ENCODE measurements at regions of chr6 and their contacts with region 1.

Region 1: GRCh38 chr6:56902641-56903464 is 52.1 kb upstream of the BEND6 start:
- DNase-seq: no peak
- ATAC-seq: peak in 3 of 4 donors; percentile 66 to 74 (median 70)
- H3K4me3 ChIP-seq: no peak overlapping the region
- H3K27ac ChIP-seq: no peak overlapping the region
- H3K4me1 ChIP-seq: no peaks in the 10 kb centered on the region
- H3K27me3 ChIP-seq: no peaks in the 10 kb centered on the region
- CTCF ChIP-seq: peak; percentile 37 to 59 (median 55)

Region 2: GRCh38 chr6:57021086-57021720 is 118.3 kb after region 1 on chr6:
- intact Hi-C with region 1: loop called in 2 of 3 experiments (anchors 5 to 10 kb)
- DNase-seq: no peak
- ATAC-seq: peak; percentile 56 to 83 (median 81)
- H3K4me3 ChIP-seq: no peak overlapping the region
- H3K27ac ChIP-seq: no peak overlapping the region
- H3K4me1 ChIP-seq: no peaks in the 10 kb centered on the region
- H3K27me3 ChIP-seq: no peaks in the 10 kb centered on the region
- CTCF ChIP-seq: peak; percentile 18 to 55 (median 37)

Region 3: GRCh38 chr6:57316581-57317059 is 413.8 kb after region 1 on chr6:
- intact Hi-C with region 1: loop called in 2 of 3 experiments (anchors 5 to 10 kb)
- DNase-seq: peak; percentile 66 to 85 (median 71)
- ATAC-seq: peak; percentile 93 to 98 (median 94)
- H3K4me3 ChIP-seq: peak overlapping the region; percentile 26 to 72 (median 48)
- H3K27ac ChIP-seq: peak overlapping the region in 2 of 4 donors; percentile 61 to 74
- H3K4me1 ChIP-seq: peaks cover 0 to 12% (median 0%) of the 10 kb centered on the region in 3 donors
- H3K27me3 ChIP-seq: no peaks in the 10 kb centered on the region
- CTCF ChIP-seq: peak; percentile 44 to 67 (median 66)